Colonic mucosa (tissue), 4 donors: ENCODE measurements at regions of chr5 and their contacts with region 1.

Region 1: DNA sequence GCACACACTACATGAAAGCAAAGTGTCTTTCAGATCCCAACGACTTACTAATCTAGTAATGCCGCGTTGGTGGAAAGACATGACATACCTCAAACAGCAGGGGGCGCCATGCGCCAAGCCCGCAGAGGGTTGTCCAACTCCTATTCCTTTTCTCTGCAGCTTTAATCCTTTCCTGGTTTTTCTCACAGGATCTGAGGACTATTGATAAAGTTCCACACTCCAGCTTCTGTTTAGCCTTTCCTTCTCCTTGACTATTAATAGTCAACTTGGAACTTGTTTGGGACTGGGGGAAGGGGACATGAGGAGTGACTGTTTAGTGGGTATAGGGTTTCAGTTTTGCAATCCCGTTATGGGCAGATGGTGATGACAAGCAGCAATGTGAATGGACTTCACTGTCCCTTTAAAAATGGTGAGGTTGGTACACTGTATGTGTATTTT is 62.9 kb downstream of the OTULIN start:
- DNase-seq: peak; percentile 81
- H3K4me3 ChIP-seq: no peak overlapping the region
- H3K27ac ChIP-seq: no peak overlapping the region
- H3K4me1 ChIP-seq: no peaks in the 10 kb centered on the region
- H3K27me3 ChIP-seq: no peaks in the 10 kb centered on the region
- CTCF ChIP-seq: peak; percentile 93

Region 2: DNA sequence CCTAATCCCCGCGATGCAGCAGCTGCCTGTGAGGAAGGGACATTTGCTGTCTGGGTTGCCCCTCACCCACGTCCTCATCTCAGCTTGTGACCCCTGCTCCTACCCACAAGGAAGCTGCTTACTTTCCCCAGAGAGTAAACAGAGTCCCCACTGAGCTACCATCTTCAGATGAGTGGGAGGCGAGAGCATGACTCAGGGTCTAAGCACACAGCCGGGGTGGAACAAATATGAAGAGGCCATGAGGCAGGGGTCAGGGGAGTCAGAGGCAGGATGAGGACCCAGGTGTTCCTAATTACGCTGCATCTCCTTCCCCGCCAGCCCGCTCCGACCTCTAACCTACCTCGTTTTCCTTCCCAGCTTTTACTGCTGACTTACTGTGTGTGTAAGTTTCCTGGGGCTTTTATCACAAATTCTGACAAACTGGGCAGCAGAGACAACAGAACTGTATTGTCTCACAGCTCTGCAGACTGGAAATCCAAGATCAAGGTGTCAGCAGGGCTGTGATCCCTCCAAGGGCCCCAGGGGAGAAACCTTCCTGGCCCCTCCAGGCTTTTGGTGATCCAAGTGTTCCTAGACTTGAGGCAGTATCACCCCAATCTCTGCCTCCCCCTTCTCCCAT is 689.0 kb before region 1 on chr5:
- intact Hi-C with region 1: no loop called
- DNase-seq: no peak
- H3K4me3 ChIP-seq: no peak overlapping the region
- H3K27ac ChIP-seq: no peak overlapping the region
- H3K4me1 ChIP-seq: no peaks in the 10 kb centered on the region
- H3K27me3 ChIP-seq: no peaks in the 10 kb centered on the region
- CTCF ChIP-seq: no peak

Region 3: DNA sequence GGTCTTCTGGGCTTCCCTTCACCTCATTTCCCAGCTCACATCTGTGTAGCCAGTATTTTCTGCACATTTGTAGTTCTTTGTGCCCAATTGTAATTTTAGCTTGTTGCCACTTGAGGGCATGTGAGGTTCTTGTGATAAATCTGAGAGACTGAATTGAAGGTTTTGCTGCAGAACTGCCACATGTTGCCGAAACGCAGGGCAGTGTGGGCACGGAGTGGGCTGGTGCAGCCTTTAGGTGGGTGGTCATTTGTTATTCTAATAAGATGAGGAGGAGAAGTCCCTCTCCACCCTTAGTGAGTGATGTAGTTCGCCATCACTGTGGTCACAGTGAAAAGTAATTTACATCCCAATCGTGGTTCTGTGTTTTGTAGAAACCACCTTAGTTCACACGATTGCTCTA is 41.7 kb before region 1 on chr5:
- intact Hi-C with region 1: loop called (anchors 5 kb)
- DNase-seq: peak; percentile 33
- H3K4me3 ChIP-seq: no peak overlapping the region
- H3K27ac ChIP-seq: no peak overlapping the region
- H3K4me1 ChIP-seq: no peaks in the 10 kb centered on the region
- H3K27me3 ChIP-seq: no peaks in the 10 kb centered on the region
- CTCF ChIP-seq: peak; percentile 56

Region 4: DNA sequence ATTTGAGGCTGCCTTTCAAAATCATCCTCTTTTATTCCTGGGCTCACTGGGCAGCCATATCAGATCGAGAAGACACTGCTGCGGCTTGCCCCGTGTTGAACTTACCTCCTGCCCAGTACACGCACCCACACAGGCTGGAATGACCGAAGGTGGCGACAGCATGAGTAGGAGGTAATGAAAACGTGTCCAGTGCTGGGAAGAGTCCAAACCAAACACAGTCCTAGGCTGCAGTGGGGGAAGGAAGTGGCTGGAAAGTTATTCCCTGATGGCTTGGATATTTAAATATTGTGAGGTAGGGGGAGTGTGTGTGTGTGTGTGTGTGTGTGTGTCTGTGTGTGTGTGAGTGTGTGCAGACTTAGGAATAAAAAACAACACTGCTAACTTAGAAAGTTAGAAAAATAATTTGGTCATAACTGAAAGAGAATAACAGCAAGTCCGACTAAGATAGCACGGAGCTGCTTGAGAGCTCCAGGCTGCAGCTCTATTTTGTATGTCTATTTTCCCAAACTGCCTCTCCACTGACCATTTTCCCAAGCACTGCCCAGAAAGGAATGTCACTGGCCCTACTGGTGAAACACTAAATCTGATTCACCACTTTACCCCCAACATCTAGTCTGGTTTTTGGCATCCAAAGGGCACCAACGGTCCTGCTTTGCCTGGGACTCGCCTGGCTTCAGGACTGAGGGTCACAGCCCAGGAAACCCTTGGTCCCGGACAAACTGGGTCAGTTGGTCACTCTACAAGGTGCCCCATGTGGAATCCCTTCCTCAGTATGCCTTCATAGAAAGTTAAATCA is 103.0 kb after region 1 on chr5:
- intact Hi-C with region 1: no loop called
- DNase-seq: no peak
- H3K4me3 ChIP-seq: no peak overlapping the region
- H3K27ac ChIP-seq: no peak overlapping the region
- H3K4me1 ChIP-seq: no peaks in the 10 kb centered on the region
- H3K27me3 ChIP-seq: no peaks in the 10 kb centered on the region
- CTCF ChIP-seq: no peak

Region 5: GRCh38 chr5:14958196-14958595 is 230.7 kb after region 1 on chr5:
- intact Hi-C with region 1: loop called (anchors 5 kb)
- DNase-seq: no peak
- H3K4me3 ChIP-seq: no peak overlapping the region
- H3K27ac ChIP-seq: no peak overlapping the region
- H3K4me1 ChIP-seq: no peaks in the 10 kb centered on the region
- H3K27me3 ChIP-seq: no peaks in the 10 kb centered on the region
- CTCF ChIP-seq: no peak

Region 6: DNA sequence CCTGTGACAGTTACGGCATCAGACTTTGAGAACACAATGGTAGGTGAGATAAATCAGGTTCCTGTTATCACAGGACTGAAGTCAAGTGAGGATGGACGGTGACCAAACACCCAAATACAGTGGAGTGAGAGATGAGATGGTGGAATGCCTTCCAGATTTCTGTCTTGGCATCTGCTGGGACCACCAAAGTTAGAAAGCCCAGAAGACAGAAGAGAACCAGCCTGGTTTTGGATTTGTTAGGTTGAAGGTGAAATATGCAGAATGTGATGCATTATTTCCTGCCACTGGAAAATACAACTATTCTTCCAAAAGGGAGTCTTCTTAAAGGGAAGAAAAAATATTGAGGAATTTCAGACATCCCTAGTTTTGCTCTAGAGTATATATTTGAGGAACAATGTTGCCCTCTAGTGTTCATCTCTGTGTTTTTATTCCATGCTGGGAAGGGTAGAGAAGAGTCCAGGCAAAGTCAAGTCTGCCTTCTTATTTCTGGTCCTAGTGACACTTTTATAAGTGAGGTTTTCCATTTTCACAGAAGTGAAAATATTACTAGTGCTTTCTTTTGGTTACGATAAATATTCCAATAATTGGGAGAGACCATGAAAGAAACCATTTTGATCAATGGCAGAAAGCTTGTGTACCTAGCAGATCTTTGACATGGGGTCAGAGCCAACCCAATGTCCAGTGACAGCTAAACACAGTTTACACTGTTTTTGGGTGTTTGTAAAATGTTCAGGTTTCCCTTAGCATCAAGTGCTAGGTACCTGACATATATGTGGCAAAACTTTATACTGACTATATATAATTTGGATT is 286.4 kb after region 1 on chr5:
- intact Hi-C with region 1: loop called (anchors 2 kb)
- DNase-seq: no peak
- H3K4me3 ChIP-seq: no peak overlapping the region
- H3K27ac ChIP-seq: no peak overlapping the region
- H3K4me1 ChIP-seq: peaks cover 3% of the 10 kb centered on the region
- H3K27me3 ChIP-seq: no peaks in the 10 kb centered on the region
- CTCF ChIP-seq: peak; percentile 53